GM10248 (cell line): ENCODE measurements at regions of chr7 and their contacts with region 1.

Region 1: GRCh38 chr7:101363734-101364374 is 1.2 kb downstream of the COL26A1 start:
- DNase-seq: peak; percentile 87
- CTCF ChIP-seq: peak; percentile 79

Region 2: GRCh38 chr7:101373812-101374614 is 10.2 kb after region 1 on chr7:
- CTCF ChIA-PET with region 1: interaction called, 10 read pairs
- POLR2A ChIA-PET with region 1: no interaction called
- DNase-seq: no peak
- CTCF ChIP-seq: no peak

Region 3: GRCh38 chr7:101436857-101437576 is 73.2 kb after region 1 on chr7:
- CTCF ChIA-PET with region 1: interaction called, 12 read pairs
- POLR2A ChIA-PET with region 1: no interaction called
- DNase-seq: no peak
- CTCF ChIP-seq: no peak